Lower leg skin (tissue), 4 donors: ENCODE measurements at regions of chr3 and their contacts with region 1.

Region 1: GRCh38 chr3:118977671-118978392 is 56.8 kb downstream of the IGSF11 start:
- DNase-seq: peak in 1 of 2 donors; percentile 83
- H3K4me3 ChIP-seq: no peak overlapping the region
- CTCF ChIP-seq: no peak
- POLR2A ChIP-seq: no peak

Region 2: DNA sequence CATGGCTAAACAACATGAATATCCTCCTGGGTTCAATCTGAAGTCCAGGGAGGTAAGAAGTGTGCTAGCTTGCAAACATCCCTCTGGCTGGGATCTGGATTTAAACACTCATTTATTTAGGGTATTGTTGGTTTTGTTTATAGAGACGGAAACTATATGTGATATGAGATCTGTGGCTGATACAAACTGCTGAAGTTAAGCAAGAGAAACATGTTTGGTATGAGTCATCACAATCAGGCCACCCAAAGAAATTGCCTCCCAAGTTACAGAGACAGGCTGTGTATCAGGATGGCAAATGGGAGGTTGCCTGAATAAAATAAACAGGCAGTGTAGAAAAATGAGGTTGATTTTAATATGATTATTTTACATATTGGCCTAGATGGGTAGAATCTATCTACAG is 505.2 kb before region 1 on chr3:
- intact Hi-C with region 1: no loop called
- DNase-seq: no peak
- H3K4me3 ChIP-seq: no peak overlapping the region
- CTCF ChIP-seq: no peak
- POLR2A ChIP-seq: no peak

Region 3: GRCh38 chr3:118997190-118997589 is 19.4 kb after region 1 on chr3:
- intact Hi-C with region 1: loop called (anchors 2 kb)
- DNase-seq: no peak
- H3K4me3 ChIP-seq: no peak overlapping the region
- CTCF ChIP-seq: no peak
- POLR2A ChIP-seq: no peak